CD8-positive, alpha-beta T cell (primary cell): ENCODE measurements at regions of chr15 and their contacts with region 1.

Region 1: GRCh38 chr15:76931397-76932007 is at the start of gene RCN2:
- DNase-seq: peak; percentile 81 to 96 (median 93)
- ATAC-seq: peak; percentile 97
- H3K4me3 ChIP-seq: peak within 1 kb of the TSS; percentile 62 to 63
- H3K4me3 Mint-ChIP-seq: peak within 1 kb of the TSS; percentile 90
- H3K27ac ChIP-seq: peak within 1 kb of the TSS; percentile 63 to 65
- H3K27ac Mint-ChIP-seq: peak within 1 kb of the TSS; percentile 91
- H3K4me1 ChIP-seq: peaks cover 24% of the 10 kb centered on the region
- H3K4me1 Mint-ChIP-seq: peaks cover 34% of the 10 kb centered on the region
- H3K27me3 ChIP-seq: no peaks in the 10 kb centered on the region
- H3K27me3 Mint-ChIP-seq: no peaks in the 10 kb centered on the region
- CTCF ChIP-seq: no peak
- total RNA-seq, gene RCN2: 25.9 to 29.7 TPM

Region 2: DNA sequence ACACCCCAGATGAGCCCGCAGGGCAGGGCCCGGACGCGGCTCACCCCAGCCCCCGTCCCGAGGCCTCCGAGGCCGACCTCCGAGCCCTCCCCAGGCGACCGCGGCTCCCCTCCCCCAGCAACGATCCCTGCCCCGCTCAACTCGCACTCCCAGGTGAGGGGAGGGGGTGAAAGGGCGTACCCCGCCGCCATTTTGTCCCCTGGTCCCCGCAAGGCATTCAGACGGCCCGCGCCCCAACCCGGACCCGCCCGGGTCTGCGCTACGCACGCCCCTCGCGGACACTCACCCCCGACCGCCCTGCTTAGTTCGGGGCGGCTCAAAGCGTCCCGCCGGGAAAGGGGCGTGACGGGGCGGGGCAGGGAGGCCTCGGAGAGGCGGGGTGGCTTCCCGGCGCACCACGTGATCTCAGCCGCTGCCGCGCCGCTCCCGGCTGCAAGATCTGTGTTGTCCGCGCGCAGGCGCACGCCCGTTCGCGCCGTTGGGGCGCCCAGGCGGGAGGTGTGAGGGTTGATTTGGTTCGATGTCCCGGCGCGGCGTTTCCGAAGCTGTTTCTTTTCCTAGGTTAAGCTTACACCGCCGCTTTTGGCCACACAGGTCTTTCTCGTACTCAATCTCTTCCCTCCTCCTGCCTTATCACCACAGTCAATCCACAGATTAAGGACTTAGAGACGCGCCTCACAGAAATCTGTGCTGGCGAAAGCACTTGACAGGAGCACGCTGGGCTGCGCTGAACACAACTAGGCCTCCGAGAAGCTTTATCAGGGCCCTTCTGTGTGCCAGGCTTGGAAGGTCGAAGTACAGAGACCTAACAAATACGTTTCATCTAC is 26.3 kb before region 1 on chr15 and contains the start of gene SCAPER:
- CTCF ChIA-PET with region 1: no interaction called
- POLR2A ChIA-PET with region 1: interaction called, 9 read pairs
- intact Hi-C with region 1: loop called (anchors 1 kb)
- DNase-seq: peak; percentile 72 to 95 (median 92)
- ATAC-seq: peak; percentile 86
- H3K4me3 ChIP-seq: peak within 1 kb of the TSS; percentile 82 to 88
- H3K4me3 Mint-ChIP-seq: peak within 1 kb of the TSS; percentile 91
- H3K27ac ChIP-seq: peak within 1 kb of the TSS; percentile 47 to 81
- H3K27ac Mint-ChIP-seq: peak within 1 kb of the TSS; percentile 96
- H3K4me1 ChIP-seq: peaks cover 24% of the 10 kb centered on the region
- H3K4me1 Mint-ChIP-seq: peaks cover 36% of the 10 kb centered on the region
- H3K27me3 ChIP-seq: no peaks in the 10 kb centered on the region
- H3K27me3 Mint-ChIP-seq: no peaks in the 10 kb centered on the region
- CTCF ChIP-seq: no peak
- total RNA-seq, gene SCAPER: 21.7 to 29.7 TPM